HEK293T (cell line): ENCODE measurements at regions of chr12 and their contacts with region 1.

Region 1: GRCh38 chr12:57533108-57533507 is 10.5 kb downstream of the MBD6 start:
- DNase-seq: no peak

Region 2: DNA sequence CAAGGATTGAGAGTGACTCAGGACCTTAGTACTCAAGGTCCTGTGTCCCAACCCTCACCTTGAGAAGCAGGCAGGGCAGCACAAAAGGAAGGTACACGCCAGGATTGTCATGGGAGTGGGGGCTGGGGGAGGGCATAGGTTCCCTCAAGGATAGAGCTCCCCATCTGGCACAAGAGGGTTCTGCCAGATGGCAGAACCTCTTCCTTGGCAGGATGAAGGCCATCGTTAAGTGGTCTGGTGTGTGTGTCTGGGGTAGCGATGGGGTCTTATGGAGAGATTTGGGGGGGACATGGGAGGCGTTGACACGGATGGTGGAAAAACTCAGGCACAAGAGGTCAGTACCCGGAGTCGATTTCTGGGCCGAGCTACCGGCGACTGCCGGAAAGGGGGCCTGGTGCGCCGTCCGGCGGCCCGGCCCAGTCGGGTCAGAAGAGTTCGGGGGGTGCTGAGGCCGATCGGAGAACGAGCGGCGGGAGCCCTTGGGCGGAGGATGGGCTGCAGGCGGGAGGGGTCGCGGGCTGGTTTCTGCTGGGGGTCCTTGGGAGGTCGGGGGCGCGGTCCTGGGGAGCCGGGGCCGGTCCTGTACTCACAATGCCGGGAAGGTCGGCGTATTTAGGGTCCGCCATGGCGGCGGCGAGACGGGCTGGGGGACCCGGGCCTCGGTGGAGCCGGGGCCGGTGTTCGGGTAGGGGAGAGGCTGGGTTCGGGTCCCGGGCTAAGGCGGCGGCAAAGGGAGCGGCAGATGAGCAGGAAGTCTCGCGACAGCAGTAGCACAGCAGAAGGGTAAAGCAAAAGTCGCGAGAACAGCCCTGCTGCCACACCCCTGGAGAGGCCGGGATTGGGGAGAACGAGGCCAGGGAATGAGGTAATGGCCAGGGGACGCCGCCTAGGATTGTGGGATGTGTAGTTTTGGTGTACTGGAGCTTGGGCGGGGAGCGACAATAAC is 13.6 kb after region 1 on chr12 and contains the start of gene DCTN2:
- CTCF ChIA-PET with region 1: no interaction called
- POLR2A ChIA-PET with region 1: interaction called, 20 read pairs
- DNase-seq: peak; percentile 99